Activated T-helper 2 cell treated with anti-CD3 and anti-CD28 coated beads, Interferon-gamma antibody, Interleukin-2, Interleukin-4, amounts not matched to agents 10 μg/mL and 5 μg/mL and 100 μg/mL, durations not matched to agents 14 hours and 24 hours and 36 hours (primary cell): ENCODE measurements at regions of chr3 and their contacts with region 1.

Region 1: GRCh38 chr3:179322286-179323196 is at the start of gene ZNF639:
- DNase-seq: peak; percentile 75
- H3K4me3 Mint-ChIP-seq: peak within 1 kb of the TSS; percentile 93
- H3K27ac Mint-ChIP-seq: peak within 1 kb of the TSS; percentile 97
- H3K4me1 Mint-ChIP-seq: peaks cover 25% of the 10 kb centered on the region
- H3K27me3 Mint-ChIP-seq: peaks cover 11% of the 10 kb centered on the region
- total RNA-seq, gene ZNF639: 34.3 and 38.7 TPM in 2 replicates

Region 2: DNA sequence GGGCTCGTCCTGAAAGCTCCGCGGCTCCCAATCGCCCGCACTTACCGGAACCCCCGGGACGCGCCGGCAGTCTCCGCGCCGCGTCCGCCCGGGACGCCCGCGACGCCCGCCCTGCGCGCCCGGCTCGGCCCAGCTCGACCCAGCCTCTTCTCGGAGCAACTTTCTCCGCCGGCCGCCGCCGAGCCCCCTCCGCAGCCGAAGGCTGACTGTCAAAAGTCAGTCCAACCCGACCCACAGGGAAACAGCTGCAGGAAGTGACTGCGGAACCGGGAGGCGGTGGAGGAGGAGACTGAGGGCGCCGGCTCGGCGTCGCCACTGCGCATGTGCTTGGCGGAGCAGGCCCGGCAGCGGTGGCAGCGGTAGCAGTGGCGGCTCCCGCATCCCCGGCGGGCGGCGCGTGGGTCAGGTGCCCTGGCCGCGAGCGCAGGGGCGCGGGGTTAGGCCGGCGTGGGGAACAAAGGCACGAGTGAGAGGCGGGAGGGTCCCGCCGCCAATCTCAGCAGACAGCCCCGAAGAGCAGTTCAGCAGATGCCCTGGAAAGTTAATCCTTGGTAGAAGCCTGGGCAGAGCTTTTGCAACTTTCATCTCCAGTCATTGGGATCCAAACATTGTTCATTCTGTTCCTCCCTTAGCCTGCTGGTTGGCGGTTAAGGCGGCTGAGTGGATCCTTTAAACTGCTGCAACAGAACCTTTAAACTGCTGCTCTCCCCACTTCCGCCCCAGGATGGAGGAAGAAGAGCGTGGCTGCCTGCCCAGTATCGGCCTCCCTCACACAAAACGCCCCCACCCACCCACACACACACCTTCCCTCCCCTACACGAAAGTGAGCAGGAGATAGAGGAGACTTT is 250.8 kb before region 1 on chr3 and contains the start of gene ZMAT3:
- intact Hi-C with region 1: loop called (anchors 2 kb)
- DNase-seq: peak; percentile 83
- H3K4me3 Mint-ChIP-seq: peak within 1 kb of the TSS; percentile 98
- H3K27ac Mint-ChIP-seq: peak within 1 kb of the TSS; percentile 94
- H3K4me1 Mint-ChIP-seq: peaks cover 31% of the 10 kb centered on the region
- H3K27me3 Mint-ChIP-seq: no peaks in the 10 kb centered on the region
- total RNA-seq, gene ZMAT3: 8.9 and 10.6 TPM in 2 replicates

Region 3: GRCh38 chr3:179236669-179237301 is 85.8 kb before region 1 on chr3:
- intact Hi-C with region 1: no loop called
- DNase-seq: no peak
- H3K4me3 Mint-ChIP-seq: no peak overlapping the region
- H3K27ac Mint-ChIP-seq: peak overlapping the region; percentile 64
- H3K4me1 Mint-ChIP-seq: peaks cover 8% of the 10 kb centered on the region
- H3K27me3 Mint-ChIP-seq: no peaks in the 10 kb centered on the region

Region 4: GRCh38 chr3:179260949-179261765 is 61.4 kb before region 1 on chr3:
- intact Hi-C with region 1: no loop called
- DNase-seq: peak; percentile 67
- H3K4me3 Mint-ChIP-seq: peak overlapping the region; percentile 66
- H3K27ac Mint-ChIP-seq: no peak overlapping the region
- H3K4me1 Mint-ChIP-seq: peaks cover 28% of the 10 kb centered on the region
- H3K27me3 Mint-ChIP-seq: peaks cover 12% of the 10 kb centered on the region

Region 5: GRCh38 chr3:179309225-179310078 is 13.1 kb before region 1 on chr3:
- intact Hi-C with region 1: no loop called
- DNase-seq: no peak
- H3K4me3 Mint-ChIP-seq: no peak overlapping the region
- H3K27ac Mint-ChIP-seq: no peak overlapping the region
- H3K4me1 Mint-ChIP-seq: no peaks in the 10 kb centered on the region
- H3K27me3 Mint-ChIP-seq: peaks cover 14% of the 10 kb centered on the region

Region 6: DNA sequence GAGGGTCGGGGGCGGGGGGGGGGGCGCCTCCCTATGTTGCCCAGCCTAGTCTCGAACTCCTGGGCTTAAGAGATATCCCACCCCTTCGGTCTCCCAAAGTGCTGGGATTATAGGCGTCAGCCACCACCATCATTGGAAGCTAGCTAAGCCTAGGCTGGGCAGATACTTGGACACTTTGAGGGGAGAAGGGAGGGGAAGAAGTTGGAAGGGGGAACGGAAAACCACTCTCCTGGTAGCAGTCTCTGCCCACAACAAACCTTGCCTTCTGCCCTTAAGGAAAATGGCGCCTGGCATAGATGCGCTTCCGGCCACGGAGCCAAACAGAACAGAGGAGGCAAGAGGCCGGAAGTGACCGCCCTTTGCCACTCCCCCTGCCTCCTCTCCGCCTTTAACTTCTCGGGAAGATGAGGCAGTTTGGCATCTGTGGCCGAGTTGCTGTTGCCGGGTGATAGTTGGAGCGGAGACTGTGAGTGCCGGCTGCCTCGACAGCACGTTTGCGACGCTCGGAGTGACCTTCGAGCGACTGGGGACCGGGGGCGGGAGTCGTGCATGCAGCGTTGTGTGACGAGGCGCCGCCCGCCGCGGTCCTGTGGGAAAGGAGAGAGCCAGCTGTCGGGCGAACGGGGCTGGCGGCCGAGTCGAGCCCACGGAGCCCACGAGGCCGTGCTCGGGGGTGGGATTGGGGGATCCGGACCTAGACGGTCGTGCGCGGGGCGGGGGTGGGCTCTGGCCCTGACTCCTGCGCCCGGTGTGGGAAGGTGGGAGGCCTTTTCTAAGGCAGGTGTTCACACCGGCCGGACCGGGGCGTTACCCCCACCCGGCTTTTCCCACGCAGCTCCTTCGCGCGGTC is 25.0 kb after region 1 on chr3 and contains the start of gene MFN1:
- intact Hi-C with region 1: loop called (anchors 1 kb)
- DNase-seq: peak; percentile 88
- H3K4me3 Mint-ChIP-seq: peak within 1 kb of the TSS; percentile 91
- H3K27ac Mint-ChIP-seq: peak within 1 kb of the TSS; percentile 89
- H3K4me1 Mint-ChIP-seq: peaks cover 15% of the 10 kb centered on the region
- H3K27me3 Mint-ChIP-seq: no peaks in the 10 kb centered on the region
- total RNA-seq, gene MFN1: 32.2 and 38.2 TPM in 2 replicates

Region 7: DNA sequence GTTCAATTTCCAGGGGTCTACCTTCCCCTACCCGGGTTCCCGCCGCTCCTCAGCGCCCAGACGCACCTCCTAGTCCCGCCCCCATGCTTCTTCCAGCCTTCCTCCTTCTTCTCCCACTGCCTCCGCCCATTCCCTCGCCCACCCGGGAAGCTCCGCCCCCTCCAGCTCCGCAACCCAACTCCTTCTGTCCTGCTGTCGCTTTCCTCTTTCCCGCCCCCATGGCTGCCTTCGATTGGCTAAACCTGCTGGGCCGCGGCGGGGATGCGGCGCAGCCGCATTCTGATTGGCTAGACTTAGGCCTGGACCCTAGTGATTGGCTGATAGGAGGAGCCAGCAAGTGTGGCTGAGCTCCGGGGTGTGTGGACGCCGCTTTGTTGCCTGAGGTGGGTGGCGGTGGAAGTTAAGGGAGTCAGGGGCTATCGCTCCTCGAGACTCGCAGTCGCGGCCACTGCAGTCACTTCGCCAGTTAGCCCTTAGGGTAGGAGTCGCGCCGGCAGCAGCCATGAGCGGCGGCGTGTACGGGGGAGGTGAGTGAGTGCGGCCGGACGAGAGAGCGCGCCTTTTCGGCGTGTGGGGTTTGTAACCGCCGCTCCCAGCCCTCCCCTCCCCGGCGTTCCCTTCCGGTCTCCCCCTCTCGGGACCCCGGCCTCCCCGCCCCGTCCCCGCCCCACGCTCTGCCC is 240.2 kb after region 1 on chr3 and contains the start of gene ACTL6A:
- intact Hi-C with region 1: loop called (anchors 1 kb)
- DNase-seq: peak; percentile 98
- H3K4me3 Mint-ChIP-seq: peak within 1 kb of the TSS; percentile 98
- H3K27ac Mint-ChIP-seq: peak within 1 kb of the TSS; percentile 98
- H3K4me1 Mint-ChIP-seq: peaks cover 30% of the 10 kb centered on the region
- H3K27me3 Mint-ChIP-seq: peaks cover 14% of the 10 kb centered on the region
- total RNA-seq, gene ACTL6A: 114 and 121 TPM in 2 replicates